Mammary epithelial cell (primary cell): ENCODE measurements at regions of chr9 and their contacts with region 1.

Region 1: GRCh38 chr9:128863647-128864046 is 18.1 kb downstream of the KYAT1 start:
- DNase-seq: peak; percentile 48
- H3K4me3 ChIP-seq: no peak overlapping the region
- H3K27ac ChIP-seq: no peak overlapping the region
- H3K4me1 ChIP-seq: peaks cover 11% of the 10 kb centered on the region
- H3K27me3 ChIP-seq: no peaks in the 10 kb centered on the region
- CTCF ChIP-seq: peak; percentile 75 to 97

Region 2: DNA sequence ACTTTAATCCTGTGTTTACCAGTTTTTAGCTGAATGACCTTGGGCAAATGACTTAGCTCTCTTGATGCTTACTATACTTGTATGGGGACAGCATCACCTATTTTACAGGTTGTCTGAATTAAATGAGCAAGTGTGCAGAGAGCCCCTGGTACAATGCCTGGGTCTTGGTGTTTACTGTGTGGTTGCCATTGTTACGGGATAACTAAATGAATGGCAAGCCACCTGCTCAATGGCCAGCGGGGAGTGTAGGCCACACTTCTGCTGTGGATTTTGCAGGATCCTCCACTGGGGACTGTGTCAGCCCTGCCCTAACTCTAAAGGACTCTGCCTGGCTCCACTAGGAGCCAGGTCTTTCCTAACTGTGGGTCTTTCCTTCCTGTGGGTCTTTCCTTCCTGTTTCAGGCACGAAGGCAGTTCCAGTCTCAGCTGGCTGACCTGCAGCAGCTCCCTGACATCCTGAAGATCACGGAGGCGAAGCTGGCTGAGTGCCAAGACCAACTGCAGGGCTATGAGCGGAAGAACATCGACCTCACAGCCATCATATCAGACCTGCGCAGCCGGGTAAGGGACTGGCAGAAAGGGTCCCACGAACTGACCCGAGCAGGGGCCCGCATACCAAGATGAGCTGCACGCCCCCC is 369.4 kb before region 1 on chr9:
- CTCF ChIA-PET with region 1: no interaction called
- dilution Hi-C with region 1: no loop called
- in situ Hi-C with region 1: no loop called
- intact Hi-C with region 1: no loop called
- DNase-seq: no peak
- H3K4me3 ChIP-seq: no peak overlapping the region
- H3K27ac ChIP-seq: no peak overlapping the region
- H3K4me1 ChIP-seq: peaks cover 12% of the 10 kb centered on the region
- H3K27me3 ChIP-seq: no peaks in the 10 kb centered on the region
- CTCF ChIP-seq: no peak

Region 3: GRCh38 chr9:128809832-128810231 is 53.8 kb before region 1 on chr9:
- CTCF ChIA-PET with region 1: no interaction called
- dilution Hi-C with region 1: loop called (anchors 10 kb)
- in situ Hi-C with region 1: no loop called
- intact Hi-C with region 1: no loop called
- DNase-seq: no peak
- H3K4me3 ChIP-seq: no peak overlapping the region
- H3K27ac ChIP-seq: no peak overlapping the region
- H3K4me1 ChIP-seq: no peaks in the 10 kb centered on the region
- H3K27me3 ChIP-seq: no peaks in the 10 kb centered on the region
- CTCF ChIP-seq: no peak

Region 4: GRCh38 chr9:128902351-128903078 is 38.9 kb after region 1 on chr9:
- CTCF ChIA-PET with region 1: no interaction called
- dilution Hi-C with region 1: no loop called
- in situ Hi-C with region 1: no loop called
- intact Hi-C with region 1: loop called (anchors 1 kb)
- DNase-seq: peak; percentile 96
- H3K4me3 ChIP-seq: no peak overlapping the region
- H3K27ac ChIP-seq: peak overlapping the region; percentile 82
- H3K4me1 ChIP-seq: peaks cover 65% of the 10 kb centered on the region
- H3K27me3 ChIP-seq: no peaks in the 10 kb centered on the region
- CTCF ChIP-seq: no peak

Region 5: GRCh38 chr9:128940271-128940921 is 76.7 kb after region 1 on chr9:
- CTCF ChIA-PET with region 1: no interaction called
- dilution Hi-C with region 1: loop called (anchors 5 kb)
- in situ Hi-C with region 1: no loop called
- intact Hi-C with region 1: no loop called
- DNase-seq: no peak
- H3K4me3 ChIP-seq: no peak overlapping the region
- H3K27ac ChIP-seq: no peak overlapping the region
- H3K4me1 ChIP-seq: peaks cover 10% of the 10 kb centered on the region
- H3K27me3 ChIP-seq: no peaks in the 10 kb centered on the region
- CTCF ChIP-seq: no peak

Region 6: DNA sequence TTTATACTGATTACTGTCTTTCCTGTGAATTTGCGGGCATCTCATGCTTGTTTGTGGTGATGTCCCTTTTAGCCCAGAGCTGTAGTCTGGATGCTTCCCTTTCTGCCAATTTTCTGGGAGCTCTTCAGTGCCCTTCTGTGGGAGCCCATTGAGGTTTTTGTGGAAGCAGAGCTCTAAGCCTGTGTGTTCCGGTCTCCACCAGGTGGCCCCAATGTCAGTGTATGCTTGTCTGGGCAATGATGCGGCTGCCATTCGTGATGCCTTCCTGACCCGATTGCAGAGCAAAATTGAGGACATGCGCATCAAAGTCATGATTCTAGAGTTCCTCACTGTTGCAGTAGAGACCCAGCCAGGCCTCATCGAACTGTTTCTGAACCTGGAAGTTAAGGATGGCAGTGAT is 129.3 kb after region 1 on chr9:
- CTCF ChIA-PET with region 1: no interaction called
- dilution Hi-C with region 1: no loop called
- in situ Hi-C with region 1: no loop called
- intact Hi-C with region 1: no loop called
- DNase-seq: peak; percentile 44
- H3K4me3 ChIP-seq: no peak overlapping the region
- H3K27ac ChIP-seq: no peak overlapping the region
- H3K4me1 ChIP-seq: peaks cover 15% of the 10 kb centered on the region
- H3K27me3 ChIP-seq: no peaks in the 10 kb centered on the region
- CTCF ChIP-seq: peak; percentile 39 to 78

Region 7: DNA sequence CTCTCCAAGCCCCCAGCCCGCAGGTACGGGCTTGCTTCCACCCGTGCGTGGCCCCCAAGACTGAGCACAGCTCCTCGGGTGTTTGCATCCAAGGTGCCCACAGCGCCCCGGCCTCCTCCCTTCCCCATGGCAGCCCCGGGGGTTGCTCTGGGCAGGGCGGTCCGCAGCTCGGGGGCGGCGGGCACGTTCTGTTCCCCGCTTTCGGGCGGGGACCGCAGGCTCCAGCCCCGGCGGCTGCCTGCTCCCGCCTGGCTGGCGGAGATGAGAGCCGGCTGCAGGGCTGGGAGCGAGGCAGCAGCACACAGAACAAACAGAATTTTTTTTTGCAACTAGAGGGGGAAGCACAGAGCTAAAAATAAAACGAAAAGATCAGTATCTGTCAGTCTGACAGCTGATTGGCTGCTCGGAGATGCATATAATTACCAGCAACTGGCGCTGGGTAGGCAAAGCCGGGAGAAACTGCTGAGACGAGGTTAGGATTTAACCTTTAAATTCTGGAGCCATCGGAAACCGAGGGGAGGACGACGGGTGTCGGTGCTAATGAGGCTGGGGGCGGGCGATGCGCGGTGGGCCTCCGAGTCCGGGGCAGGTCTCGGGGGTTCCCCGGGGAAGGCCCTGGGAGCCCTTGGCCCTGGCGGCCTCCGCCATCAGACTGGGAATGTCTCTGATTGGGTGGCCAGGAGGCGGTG is 457.1 kb after region 1 on chr9:
- CTCF ChIA-PET with region 1: no interaction called
- dilution Hi-C with region 1: no loop called
- in situ Hi-C with region 1: no loop called
- intact Hi-C with region 1: no loop called
- DNase-seq: no peak
- H3K4me3 ChIP-seq: peak overlapping the region in 1 of 3 experiments; percentile 12
- H3K27ac ChIP-seq: no peak overlapping the region
- H3K4me1 ChIP-seq: peaks cover 14% of the 10 kb centered on the region
- H3K27me3 ChIP-seq: no peaks in the 10 kb centered on the region
- CTCF ChIP-seq: no peak